Activated CD8-positive, alpha-beta T cell treated with anti-CD3 and anti-CD28 coated beads for 36 hours (primary cell): ENCODE measurements at regions of chr14 and their contacts with region 1.

Region 1: DNA sequence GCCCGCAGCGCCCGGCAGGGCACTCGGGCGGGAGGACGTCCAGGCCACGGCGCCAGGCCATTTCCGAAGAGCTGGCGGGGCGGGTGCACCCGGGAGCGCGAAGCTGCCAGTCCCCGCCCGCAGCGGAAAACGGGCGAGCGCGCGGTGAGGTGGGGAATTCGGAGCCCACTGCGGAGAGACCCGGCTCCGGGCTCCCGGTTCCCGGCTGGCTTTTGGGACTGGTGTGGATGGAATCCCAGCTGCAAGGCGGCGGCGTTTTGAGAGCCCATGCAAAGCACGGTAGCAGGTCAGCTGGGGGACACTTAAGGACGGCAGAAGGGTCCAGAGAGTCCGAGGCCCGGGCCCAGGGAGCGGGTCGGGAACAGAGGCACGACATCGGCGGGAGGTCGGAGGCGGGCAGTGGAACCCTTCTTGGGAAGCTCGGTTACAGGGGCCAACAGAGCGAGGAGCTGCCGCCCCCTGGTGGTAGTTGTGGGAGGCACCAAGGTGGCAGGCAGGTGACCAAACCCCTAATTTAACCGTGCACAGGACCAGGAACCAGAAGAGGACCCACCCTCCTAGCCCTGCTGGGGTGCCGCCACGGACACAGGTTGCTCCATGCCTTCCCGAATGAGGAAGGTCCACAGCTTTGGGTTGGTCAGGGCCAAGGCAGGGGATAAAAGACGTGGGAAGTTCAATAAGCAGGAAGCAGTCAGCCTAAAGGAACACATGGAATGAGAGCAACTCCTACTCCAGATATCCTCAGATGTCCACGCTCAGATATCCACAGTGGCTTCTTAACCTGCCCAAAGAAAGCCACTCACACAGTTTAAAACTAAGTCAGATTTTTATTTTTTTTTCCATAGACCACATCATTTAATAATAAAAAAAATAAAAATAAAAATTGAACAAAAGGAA is 685 bp upstream of the CDH24 start:
- DNase-seq: peak; percentile 91
- ATAC-seq: peak; percentile 73
- H3K4me3 Mint-ChIP-seq: peak overlapping the region; percentile 76
- H3K27ac Mint-ChIP-seq: no peak overlapping the region
- H3K4me1 Mint-ChIP-seq: peaks cover 19% of the 10 kb centered on the region
- H3K27me3 Mint-ChIP-seq: peaks cover 7% of the 10 kb centered on the region
- CTCF ChIP-seq: peak; percentile 94

Region 2: DNA sequence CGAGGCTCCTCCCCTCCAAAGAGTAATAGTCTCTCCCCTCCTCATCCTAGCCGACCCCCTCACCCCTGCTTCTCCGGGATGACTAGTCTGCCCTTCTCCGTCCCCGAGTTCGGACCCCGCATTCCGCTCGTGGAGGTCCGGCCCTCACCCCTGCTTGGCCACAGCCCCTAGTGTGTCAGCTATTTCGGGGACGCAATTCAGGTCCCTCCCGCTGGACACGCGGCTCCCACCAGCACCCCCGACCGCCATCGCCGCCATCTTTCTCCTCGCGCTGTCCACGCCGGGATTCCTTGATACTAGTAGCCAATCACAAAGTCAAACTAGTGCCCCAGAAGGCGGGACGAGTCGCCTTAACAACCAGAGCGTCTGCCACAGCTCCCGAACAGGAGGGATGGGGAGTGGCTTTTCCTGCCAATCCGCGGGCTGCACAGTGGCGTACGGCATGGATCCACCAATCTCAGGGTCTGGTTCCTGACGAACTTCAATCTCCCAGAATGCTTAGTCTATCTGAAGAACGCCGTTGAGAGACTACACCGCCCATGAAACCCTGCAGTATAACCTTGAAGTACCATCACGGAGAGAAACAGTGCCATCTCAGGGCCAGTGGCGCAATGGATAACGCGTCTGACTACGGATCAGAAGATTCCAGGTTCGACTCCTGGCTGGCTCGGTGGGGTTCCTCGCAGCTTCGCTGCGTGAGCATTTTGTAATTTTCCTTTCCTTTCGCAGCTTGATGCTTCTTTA is 128.7 kb before region 1 on chr14 and contains the start of gene PRMT5:
- CTCF ChIA-PET with region 1: interaction called, 17 read pairs
- POLR2A ChIA-PET with region 1: interaction called, 3 read pairs
- intact Hi-C with region 1: no loop called
- DNase-seq: peak; percentile 99
- ATAC-seq: peak; percentile 96
- H3K4me3 Mint-ChIP-seq: no peak within 1 kb of the TSS
- H3K27ac Mint-ChIP-seq: no peak within 1 kb of the TSS
- H3K4me1 Mint-ChIP-seq: peaks cover 31% of the 10 kb centered on the region
- H3K27me3 Mint-ChIP-seq: no peaks in the 10 kb centered on the region
- CTCF ChIP-seq: no peak
- total RNA-seq, gene PRMT5: 107 to 116 TPM

Region 3: GRCh38 chr14:22973217-22974032 is 84.6 kb before region 1 on chr14:
- CTCF ChIA-PET with region 1: interaction called, 201 read pairs
- POLR2A ChIA-PET with region 1: interaction called, 5 read pairs
- intact Hi-C with region 1: no loop called
- DNase-seq: peak; percentile 56
- ATAC-seq: peak; percentile 69
- H3K4me3 Mint-ChIP-seq: no peak overlapping the region
- H3K27ac Mint-ChIP-seq: no peak overlapping the region
- H3K4me1 Mint-ChIP-seq: no peaks in the 10 kb centered on the region
- H3K27me3 Mint-ChIP-seq: no peaks in the 10 kb centered on the region
- CTCF ChIP-seq: peak; percentile 80

Region 4: DNA sequence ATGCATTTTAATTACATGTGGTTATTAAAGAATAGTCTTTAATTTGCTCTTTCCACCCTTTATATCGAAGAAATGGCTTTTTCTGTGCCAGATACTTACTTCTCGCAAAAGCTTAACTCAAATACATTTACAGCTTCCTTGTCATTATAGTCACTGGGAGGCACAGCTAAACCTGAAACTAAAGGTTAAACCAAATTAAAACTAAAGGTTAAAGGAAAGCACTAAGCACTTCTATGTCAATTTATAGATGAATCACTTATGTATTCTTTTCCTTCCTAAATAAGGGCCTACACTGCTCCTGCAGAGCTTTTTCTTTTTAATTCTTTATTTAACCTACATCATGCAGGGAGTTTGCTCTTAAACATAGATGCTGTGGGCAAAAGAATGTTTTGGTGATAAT is 57.1 kb before region 1 on chr14:
- CTCF ChIA-PET with region 1: interaction called, 289 read pairs
- POLR2A ChIA-PET with region 1: interaction called, 17 read pairs
- intact Hi-C with region 1: loop called (anchors 5 kb)
- DNase-seq: no peak
- ATAC-seq: peak; percentile 47
- H3K4me3 Mint-ChIP-seq: no peak overlapping the region
- H3K27ac Mint-ChIP-seq: no peak overlapping the region
- H3K4me1 Mint-ChIP-seq: peaks cover 10% of the 10 kb centered on the region
- H3K27me3 Mint-ChIP-seq: no peaks in the 10 kb centered on the region
- CTCF ChIP-seq: no peak

Region 5: GRCh38 chr14:23034483-23035302 is 23.3 kb before region 1 on chr14 and contains the start of gene PSMB5:
- CTCF ChIA-PET with region 1: interaction called, 29 read pairs
- POLR2A ChIA-PET with region 1: interaction called, 4 read pairs
- intact Hi-C with region 1: no loop called
- DNase-seq: peak; percentile 96
- ATAC-seq: peak; percentile 96
- H3K4me3 Mint-ChIP-seq: peak within 1 kb of the TSS; percentile 92
- H3K27ac Mint-ChIP-seq: peak within 1 kb of the TSS; percentile 98
- H3K4me1 Mint-ChIP-seq: peaks cover 31% of the 10 kb centered on the region
- H3K27me3 Mint-ChIP-seq: no peaks in the 10 kb centered on the region
- CTCF ChIP-seq: no peak
- total RNA-seq, gene PSMB5: 119 to 120 TPM

Region 6: GRCh38 chr14:23076785-23077408 is 18.9 kb after region 1 on chr14:
- CTCF ChIA-PET with region 1: interaction called, 196 read pairs
- POLR2A ChIA-PET with region 1: interaction called, 7 read pairs
- intact Hi-C with region 1: no loop called
- DNase-seq: peak; percentile 39
- ATAC-seq: peak; percentile 70
- H3K4me3 Mint-ChIP-seq: no peak overlapping the region
- H3K27ac Mint-ChIP-seq: no peak overlapping the region
- H3K4me1 Mint-ChIP-seq: peaks cover 9% of the 10 kb centered on the region
- H3K27me3 Mint-ChIP-seq: no peaks in the 10 kb centered on the region
- CTCF ChIP-seq: peak; percentile 70